ENCODE measurements at regions of chr6 and their contacts with region 1.

Region 1: GRCh38 chr6:125574604-125575003 is 174.8 kb upstream of the HEY2 start:
- DNase-seq: no peak
- ATAC-seq: no peak

Region 2: DNA sequence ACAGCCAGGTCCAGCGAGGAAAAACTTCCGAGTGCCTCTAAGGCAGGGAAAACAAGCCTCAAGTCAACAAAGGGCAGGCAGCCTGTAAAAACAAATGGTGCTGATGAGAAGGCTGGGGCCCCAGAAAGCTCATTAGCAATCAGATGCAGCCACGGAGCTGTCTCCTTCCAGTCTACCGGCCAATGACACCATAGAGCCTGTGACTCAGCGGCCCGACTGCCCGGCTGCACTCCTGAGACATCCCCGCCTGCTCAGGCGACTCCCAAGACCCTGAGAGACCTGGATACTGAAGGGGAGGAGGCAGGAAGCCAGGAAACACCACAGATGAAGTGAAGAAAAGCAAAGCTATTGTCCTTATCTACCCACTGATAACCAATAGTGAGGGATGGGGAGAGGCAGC is 152.8 kb before region 1 on chr6:
- intact Hi-C with region 1: no loop called
- DNase-seq: no peak
- ATAC-seq: peak; percentile 75

Region 3: GRCh38 chr6:125544819-125545218 is 29.8 kb before region 1 on chr6:
- intact Hi-C with region 1: loop called (anchors 5 kb)
- DNase-seq: no peak
- ATAC-seq: no peak

Region 4: DNA sequence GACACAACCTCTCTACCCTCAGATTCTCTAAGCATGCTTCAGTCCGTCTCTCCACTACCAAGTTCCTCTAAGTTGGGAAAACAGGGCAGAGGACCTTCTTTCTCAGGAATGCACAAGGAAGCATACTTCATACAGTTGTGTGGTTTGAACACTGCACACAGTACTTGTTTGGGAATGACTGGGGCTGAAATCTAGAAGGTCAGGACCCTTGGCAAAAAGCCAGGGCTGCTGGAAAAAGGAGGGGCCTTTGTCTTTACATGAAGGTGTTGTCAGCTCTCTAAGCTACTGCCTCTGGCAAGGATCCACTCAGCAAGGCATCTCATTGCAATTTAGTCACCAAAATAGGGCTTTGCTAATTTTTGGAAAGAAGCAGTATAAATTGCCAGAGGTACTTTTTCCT is 154.1 kb after region 1 on chr6:
- intact Hi-C with region 1: no loop called
- DNase-seq: no peak
- ATAC-seq: no peak